Right cardiac atrium (tissue), 5 donors: ENCODE measurements at regions of chr7 and their contacts with region 1.

Region 1: GRCh38 chr7:132500727-132501440 is 75.4 kb downstream of the PLXNA4 start:
- DNase-seq: peak; percentile 86 to 92 (median 86)
- ATAC-seq: peak; percentile 87 to 90
- H3K4me3 ChIP-seq: no peak overlapping the region
- H3K27ac ChIP-seq: peak overlapping the region; percentile 38
- H3K4me1 ChIP-seq: peaks cover 14% of the 10 kb centered on the region
- H3K27me3 ChIP-seq: no peaks in the 10 kb centered on the region

Region 2: DNA sequence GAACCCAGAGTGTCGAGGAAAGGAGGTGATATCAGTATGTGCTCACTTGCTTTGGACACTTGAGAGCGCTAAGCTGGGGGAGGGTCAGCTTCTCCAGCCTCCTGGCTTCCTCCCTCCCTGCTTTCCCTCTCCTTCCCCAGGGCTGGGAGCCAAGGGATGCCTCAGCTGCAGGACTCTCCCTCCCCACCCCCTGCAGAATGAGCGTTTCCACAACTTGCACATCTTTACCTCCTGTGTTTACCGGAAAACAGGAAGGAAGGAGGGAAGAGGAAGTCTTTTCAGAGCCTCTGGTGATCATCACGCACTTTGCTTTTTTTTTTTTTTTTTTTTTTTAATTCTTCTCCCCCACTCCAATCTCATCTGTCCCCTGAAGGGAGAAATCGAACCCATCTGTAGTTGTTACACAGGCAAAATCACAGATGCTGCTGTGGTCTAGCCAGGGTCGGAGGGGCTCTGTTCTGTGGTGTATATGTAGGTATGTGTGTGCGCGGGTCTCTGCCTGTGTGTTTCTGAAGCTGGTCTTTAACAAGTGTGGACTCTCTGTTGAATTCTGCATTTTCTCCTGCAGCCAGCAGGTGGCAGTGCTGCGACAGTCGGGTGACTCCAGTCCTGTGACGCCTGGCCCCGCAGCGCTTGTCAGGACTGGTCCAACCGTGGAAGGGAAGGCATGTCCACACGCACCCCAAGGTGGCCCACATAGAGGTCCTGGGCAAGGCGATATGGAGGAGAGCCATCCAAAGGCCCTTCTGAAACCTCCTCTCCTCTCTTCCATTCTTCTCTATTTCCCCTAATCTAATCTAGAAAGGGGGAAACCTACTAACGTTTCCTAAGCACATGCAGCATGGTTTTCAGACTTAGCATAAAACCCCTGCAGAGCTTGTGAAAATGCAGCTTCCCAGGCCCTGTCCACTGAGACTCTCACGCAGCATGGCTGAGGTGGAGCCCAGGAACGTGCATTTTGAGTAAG is 182.2 kb before region 1 on chr7:
- intact Hi-C with region 1: loop called in 2 of 4 experiments (anchors 5 kb)
- DNase-seq: peak; percentile 87 to 93 (median 93)
- ATAC-seq: peak; percentile 89 to 90
- H3K4me3 ChIP-seq: no peak overlapping the region
- H3K27ac ChIP-seq: no peak overlapping the region
- H3K4me1 ChIP-seq: no peaks in the 10 kb centered on the region
- H3K27me3 ChIP-seq: no peaks in the 10 kb centered on the region

Region 3: GRCh38 chr7:132402751-132403245 is 98.1 kb before region 1 on chr7:
- intact Hi-C with region 1: loop called in 1 of 4 experiments (anchors 10 kb)
- DNase-seq: peak in 2 of 3 donors; percentile 68 to 72
- ATAC-seq: peak; percentile 52 to 75
- H3K4me3 ChIP-seq: no peak overlapping the region
- H3K27ac ChIP-seq: peak overlapping the region; percentile 46
- H3K4me1 ChIP-seq: peaks cover 12% of the 10 kb centered on the region
- H3K27me3 ChIP-seq: no peaks in the 10 kb centered on the region